MCF 10A (cell line): ENCODE measurements at regions of chr9 and their contacts with region 1.

Region 1: GRCh38 chr9:2857564-2858198 is 13.8 kb upstream of the PUM3 start:
- DNase-seq: peak; percentile 74
- H3K4me3 Mint-ChIP-seq: no peak overlapping the region
- H3K27ac Mint-ChIP-seq: no peak overlapping the region
- H3K4me1 Mint-ChIP-seq: no peaks in the 10 kb centered on the region
- H3K27me3 Mint-ChIP-seq: peaks cover 60% of the 10 kb centered on the region
- CTCF ChIP-seq: peak; percentile 71

Region 2: GRCh38 chr9:2837915-2838314 is 19.8 kb before region 1 on chr9:
- CTCF ChIA-PET with region 1: interaction called, 11 read pairs
- POLR2A ChIA-PET with region 1: interaction called, 6 read pairs
- intact Hi-C with region 1: no loop called
- DNase-seq: no peak
- H3K4me3 Mint-ChIP-seq: peak overlapping the region; percentile 63
- H3K27ac Mint-ChIP-seq: peak overlapping the region; percentile 84
- H3K4me1 Mint-ChIP-seq: peaks cover 24% of the 10 kb centered on the region
- H3K27me3 Mint-ChIP-seq: no peaks in the 10 kb centered on the region
- CTCF ChIP-seq: peak; percentile 35

Region 3: DNA sequence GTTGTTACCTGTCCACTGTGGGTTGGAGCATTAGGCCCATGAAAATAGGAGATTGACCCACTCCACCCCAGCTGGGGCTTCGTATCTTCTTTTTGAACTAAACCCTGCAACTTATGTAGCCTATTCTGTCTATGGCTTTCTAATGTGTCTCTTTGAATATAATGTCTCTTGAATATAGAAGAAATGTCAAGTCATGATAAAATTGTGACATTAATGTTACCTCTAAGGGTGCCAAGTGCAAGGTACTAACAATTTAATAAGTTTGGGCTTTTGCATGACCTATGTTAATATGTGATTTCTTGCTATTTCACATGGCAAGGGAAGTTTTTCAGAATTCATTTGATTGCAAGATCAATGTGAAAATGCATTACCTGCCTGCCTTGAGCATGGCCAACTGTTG is 26.6 kb after region 1 on chr9:
- CTCF ChIA-PET with region 1: no interaction called
- POLR2A ChIA-PET with region 1: no interaction called
- intact Hi-C with region 1: no loop called
- DNase-seq: no peak
- H3K4me3 Mint-ChIP-seq: no peak overlapping the region
- H3K27ac Mint-ChIP-seq: no peak overlapping the region
- H3K4me1 Mint-ChIP-seq: no peaks in the 10 kb centered on the region
- H3K27me3 Mint-ChIP-seq: peaks cover 31% of the 10 kb centered on the region
- CTCF ChIP-seq: no peak

Region 4: GRCh38 chr9:2955575-2955974 is 97.9 kb after region 1 on chr9:
- CTCF ChIA-PET with region 1: interaction called, 3 read pairs
- POLR2A ChIA-PET with region 1: no interaction called
- intact Hi-C with region 1: loop called (anchors 5 kb)
- DNase-seq: no peak
- H3K4me3 Mint-ChIP-seq: no peak overlapping the region
- H3K27ac Mint-ChIP-seq: no peak overlapping the region
- H3K4me1 Mint-ChIP-seq: no peaks in the 10 kb centered on the region
- H3K27me3 Mint-ChIP-seq: peaks cover 63% of the 10 kb centered on the region
- CTCF ChIP-seq: no peak

Region 5: GRCh38 chr9:3181049-3181953 is 323.6 kb after region 1 on chr9:
- CTCF ChIA-PET with region 1: interaction called, 5 read pairs
- POLR2A ChIA-PET with region 1: no interaction called
- intact Hi-C with region 1: loop called (anchors 1 kb)
- DNase-seq: peak; percentile 40
- H3K4me3 Mint-ChIP-seq: no peak overlapping the region
- H3K27ac Mint-ChIP-seq: no peak overlapping the region
- H3K4me1 Mint-ChIP-seq: peaks cover 8% of the 10 kb centered on the region
- H3K27me3 Mint-ChIP-seq: peaks cover 43% of the 10 kb centered on the region
- CTCF ChIP-seq: no peak

Region 6: GRCh38 chr9:4375424-4376200 is 1517.9 kb after region 1 on chr9:
- CTCF ChIA-PET with region 1: interaction called, 10 read pairs
- POLR2A ChIA-PET with region 1: no interaction called
- intact Hi-C with region 1: loop called (anchors 1 kb)
- DNase-seq: peak; percentile 50
- H3K4me3 Mint-ChIP-seq: no peak overlapping the region
- H3K27ac Mint-ChIP-seq: no peak overlapping the region
- H3K4me1 Mint-ChIP-seq: peaks cover 11% of the 10 kb centered on the region
- H3K27me3 Mint-ChIP-seq: peaks cover 24% of the 10 kb centered on the region
- CTCF ChIP-seq: peak; percentile 54